A673 (cell line): ENCODE measurements at regions of chr7 and their contacts with region 1.

Region 1: GRCh38 chr7:108824840-108825580 is 255.3 kb downstream of the DNAJB9 start:
- DNase-seq: peak; percentile 91
- H3K4me3 ChIP-seq: peak overlapping the region; percentile 34
- H3K27ac ChIP-seq: peak overlapping the region; percentile 67
- H3K4me1 ChIP-seq: peaks cover 23% of the 10 kb centered on the region
- H3K27me3 ChIP-seq: no peaks in the 10 kb centered on the region
- CTCF ChIP-seq: no peak

Region 2: DNA sequence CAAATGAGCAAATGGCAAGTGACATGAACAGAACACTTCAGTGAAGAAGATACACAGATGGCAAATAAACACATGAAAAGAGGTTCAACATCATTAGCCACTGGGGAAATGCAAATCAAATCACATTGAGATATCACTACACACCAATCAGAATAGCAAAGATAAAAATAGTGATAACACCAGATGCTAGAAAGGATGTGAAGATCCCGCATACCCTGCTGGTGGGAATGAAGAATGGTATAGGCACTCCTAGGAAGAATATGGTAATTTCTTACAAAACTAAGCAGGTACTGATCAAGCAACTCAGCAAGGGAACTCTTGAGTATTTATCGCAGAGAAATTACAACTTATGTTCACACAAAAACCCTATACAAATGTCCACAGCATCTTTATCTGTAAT is 706.1 kb before region 1 on chr7:
- CTCF ChIA-PET with region 1: no interaction called
- POLR2A ChIA-PET with region 1: no interaction called
- intact Hi-C with region 1: no loop called
- DNase-seq: no peak
- H3K4me3 ChIP-seq: no peak overlapping the region
- H3K27ac ChIP-seq: no peak overlapping the region
- H3K4me1 ChIP-seq: no peaks in the 10 kb centered on the region
- H3K27me3 ChIP-seq: no peaks in the 10 kb centered on the region
- CTCF ChIP-seq: no peak

Region 3: GRCh38 chr7:108770981-108771745 is 53.8 kb before region 1 on chr7:
- CTCF ChIA-PET with region 1: no interaction called
- POLR2A ChIA-PET with region 1: no interaction called
- intact Hi-C with region 1: loop called (anchors 5 kb)
- DNase-seq: peak; percentile 95
- H3K4me3 ChIP-seq: no peak overlapping the region
- H3K27ac ChIP-seq: peak overlapping the region; percentile 95
- H3K4me1 ChIP-seq: peaks cover 52% of the 10 kb centered on the region
- H3K27me3 ChIP-seq: no peaks in the 10 kb centered on the region
- CTCF ChIP-seq: no peak